Ascending aorta (tissue), 2 donors: ENCODE measurements at regions of chr16 and their contacts with region 1.

Region 1: DNA sequence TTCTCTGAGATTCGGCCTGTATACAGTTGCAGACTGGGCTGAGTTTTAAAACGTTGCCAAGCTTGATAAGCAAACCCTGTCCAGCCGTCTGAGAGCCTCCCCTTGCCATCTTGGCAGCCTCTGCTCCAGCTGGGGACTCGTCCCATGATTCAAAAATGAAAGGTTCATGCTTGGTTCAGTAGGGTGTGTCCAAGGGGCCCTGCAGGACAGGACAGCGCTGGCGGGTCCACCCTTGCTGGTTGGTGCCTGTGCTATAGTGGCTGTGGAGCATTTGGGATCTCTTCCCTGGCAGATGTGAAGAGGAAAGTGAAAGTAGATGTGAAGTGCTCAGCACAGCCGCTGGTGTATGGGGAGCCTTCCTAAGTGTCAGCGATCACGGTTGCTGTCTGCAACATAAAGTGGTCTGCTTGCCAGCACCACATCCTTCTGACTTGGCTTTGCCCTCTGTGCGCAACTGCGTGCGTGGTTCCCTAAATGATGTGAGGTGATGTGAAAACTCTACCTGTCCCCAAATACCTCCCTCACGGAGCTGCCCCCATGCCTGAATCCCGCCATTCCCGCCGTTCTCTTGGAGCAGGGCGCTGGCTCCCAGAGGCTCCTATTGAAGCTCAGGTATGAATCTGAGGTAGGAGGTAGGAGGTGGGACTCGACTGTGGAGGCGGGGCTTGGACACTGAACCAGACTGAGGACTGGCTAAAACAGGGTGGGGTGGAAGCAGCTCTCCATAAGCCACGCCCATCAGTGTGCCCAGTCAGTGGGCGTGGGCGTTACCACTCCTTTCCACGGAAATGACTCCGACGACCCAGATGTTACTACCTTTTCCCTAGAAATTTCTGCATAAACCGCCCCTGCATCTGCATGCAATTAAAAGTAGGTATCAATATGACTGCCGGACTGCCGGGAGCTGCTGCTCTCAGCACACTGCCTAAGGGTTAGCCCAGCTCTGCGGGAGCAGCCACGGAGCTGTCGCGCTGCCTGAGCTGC is 40.8 kb downstream of the FOXL1 start:
- DNase-seq: peak in 1 of 2 donors; percentile 65
- H3K4me3 ChIP-seq: peak overlapping the region; percentile 32 to 60
- H3K27ac ChIP-seq: peak overlapping the region; percentile 54 to 75
- H3K4me1 ChIP-seq: peaks cover 0 to 7% of the 10 kb centered on the region in 2 donors
- H3K27me3 ChIP-seq: no peaks in the 10 kb centered on the region
- CTCF ChIP-seq: no peak

Region 2: GRCh38 chr16:86457501-86458148 is 161.5 kb before region 1 on chr16:
- intact Hi-C with region 1: no loop called
- DNase-seq: no peak
- H3K4me3 ChIP-seq: no peak overlapping the region
- H3K27ac ChIP-seq: no peak overlapping the region
- H3K4me1 ChIP-seq: no peaks in the 10 kb centered on the region
- H3K27me3 ChIP-seq: no peaks in the 10 kb centered on the region
- CTCF ChIP-seq: no peak

Region 3: DNA sequence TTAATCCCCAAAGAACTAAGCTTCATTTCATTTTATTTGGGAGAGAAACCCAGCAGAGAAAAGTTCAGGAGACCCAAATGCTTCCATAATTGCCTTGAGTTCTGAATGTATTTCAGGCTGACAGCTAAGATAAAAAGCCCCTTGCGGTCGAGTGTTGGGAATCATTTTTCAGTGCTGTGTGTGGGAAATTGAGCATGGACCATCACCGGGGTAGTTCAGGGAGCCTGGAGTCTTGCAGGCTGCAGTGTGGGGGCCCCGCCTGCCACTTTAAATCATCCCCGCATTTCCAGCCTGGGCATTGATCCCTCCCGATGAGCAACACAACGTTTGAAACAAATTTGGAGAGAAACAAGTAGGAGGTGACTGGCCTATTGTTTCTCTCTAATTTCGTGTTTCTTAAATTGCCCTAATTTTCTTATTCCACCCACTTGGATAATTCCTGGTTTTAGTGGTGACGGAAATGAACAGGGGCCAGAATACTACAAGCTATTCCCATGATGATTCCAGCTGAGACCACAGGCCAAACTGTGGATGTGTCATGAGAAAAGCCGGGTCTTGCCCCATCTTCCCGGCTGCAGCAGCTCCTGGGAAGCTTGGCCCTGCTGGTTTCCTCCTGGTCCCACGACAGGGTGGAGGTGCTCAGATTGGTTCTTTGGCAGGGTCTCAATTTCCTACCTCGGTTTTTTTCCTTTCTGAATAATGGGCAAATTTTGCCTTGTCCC is 34.3 kb after region 1 on chr16:
- intact Hi-C with region 1: loop called (anchors 5 kb)
- DNase-seq: peak in 1 of 2 donors; percentile 75
- H3K4me3 ChIP-seq: no peak overlapping the region
- H3K27ac ChIP-seq: peak overlapping the region; percentile 47 to 52
- H3K4me1 ChIP-seq: peaks cover 0 to 7% of the 10 kb centered on the region in 2 donors
- H3K27me3 ChIP-seq: no peaks in the 10 kb centered on the region
- CTCF ChIP-seq: no peak

Region 4: DNA sequence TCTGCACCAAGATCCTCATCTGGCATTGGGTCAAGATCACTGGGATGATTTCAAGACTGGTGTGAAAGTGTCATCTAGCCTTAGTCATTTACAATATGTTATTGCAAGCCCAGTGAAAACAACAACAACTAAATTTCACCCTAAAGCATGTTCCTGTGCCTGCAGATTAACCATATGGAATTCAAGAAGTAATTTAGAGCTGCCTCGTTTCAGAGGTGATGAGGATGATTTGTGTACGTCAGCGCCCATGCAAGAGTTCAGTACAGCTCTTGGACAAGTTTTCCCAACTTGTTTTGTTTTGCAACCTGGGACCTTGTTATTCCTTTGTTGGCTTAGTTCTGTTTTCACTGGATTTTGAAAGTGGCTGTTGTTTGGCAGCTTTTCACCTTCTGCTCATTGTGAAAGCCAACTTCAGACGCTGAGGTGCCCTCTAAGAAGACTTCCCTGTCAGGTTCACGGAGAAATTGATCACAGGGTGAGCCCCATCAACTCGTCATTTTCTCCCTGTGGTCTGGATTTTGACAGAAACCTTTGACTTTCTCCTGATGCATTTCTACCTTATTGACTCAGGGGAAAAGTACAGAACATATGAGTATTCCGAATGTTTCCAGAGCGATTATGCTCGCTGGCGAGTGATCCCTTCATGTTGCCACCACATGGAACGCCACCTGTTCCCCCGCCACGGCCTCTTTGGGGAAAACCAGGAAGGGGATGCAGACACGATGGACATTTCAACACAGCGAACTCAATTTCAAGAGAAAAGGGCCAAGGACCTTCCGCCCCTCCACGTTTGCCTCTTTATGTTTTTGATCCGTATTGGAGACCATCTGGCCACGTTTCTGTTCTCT is 44.8 kb after region 1 on chr16:
- intact Hi-C with region 1: no loop called
- DNase-seq: no peak
- H3K4me3 ChIP-seq: no peak overlapping the region
- H3K27ac ChIP-seq: peak overlapping the region; percentile 74 to 75
- H3K4me1 ChIP-seq: peaks cover 3 to 30% of the 10 kb centered on the region in 2 donors
- H3K27me3 ChIP-seq: no peaks in the 10 kb centered on the region
- CTCF ChIP-seq: no peak